AG04450 (cell line): ENCODE measurements at regions of chr4 and their contacts with region 1.

Region 1: DNA sequence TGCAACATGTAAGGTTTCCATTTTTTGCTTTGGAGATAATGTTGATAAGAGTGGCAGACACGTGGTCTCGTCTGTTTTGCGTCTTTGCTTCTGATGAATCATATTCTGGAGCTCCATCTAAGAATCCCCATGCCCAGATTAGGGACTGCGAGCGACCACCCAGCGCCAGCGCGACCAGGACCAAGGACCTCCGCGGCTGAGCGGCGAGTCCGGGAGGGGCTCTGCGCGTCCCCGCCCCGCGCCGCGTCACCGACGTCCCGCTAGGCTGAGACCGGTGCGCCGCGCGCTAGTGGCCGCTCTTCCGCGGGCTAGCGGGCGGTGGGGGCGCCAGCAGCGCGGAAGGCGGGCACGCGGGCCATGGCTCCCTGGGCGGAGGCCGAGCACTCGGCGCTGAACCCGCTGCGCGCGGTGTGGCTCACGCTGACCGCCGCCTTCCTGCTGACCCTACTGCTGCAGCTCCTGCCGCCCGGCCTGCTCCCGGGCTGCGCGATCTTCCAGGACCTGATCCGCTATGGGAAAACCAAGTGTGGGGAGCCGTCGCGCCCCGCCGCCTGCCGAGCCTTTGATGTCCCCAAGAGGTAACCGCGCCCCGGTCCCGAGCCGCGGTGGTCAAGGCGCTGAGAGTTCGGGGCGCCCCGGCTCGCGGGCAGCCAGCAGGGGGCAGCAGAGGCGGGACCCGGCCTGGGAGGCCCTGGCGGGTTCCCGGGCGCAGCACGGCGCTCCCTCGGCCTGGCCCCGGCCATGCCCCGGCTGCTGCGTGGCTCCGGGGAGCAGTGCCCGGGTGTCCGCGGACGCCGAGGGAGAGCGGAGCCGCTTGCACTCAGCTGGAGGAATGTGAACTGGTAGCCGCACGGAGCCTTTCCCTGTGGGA is at the start of gene SRD5A3:
- DNase-seq: no peak
- H3K4me3 ChIP-seq: peak within 1 kb of the TSS; percentile 71
- H3K27ac ChIP-seq: peak within 1 kb of the TSS; percentile 69
- H3K27me3 ChIP-seq: no peaks in the 10 kb centered on the region
- CTCF ChIP-seq: peak; percentile 70
- polyA plus RNA-seq, gene SRD5A3: 13.2 and 15.8 TPM in 2 replicates

Region 2: DNA sequence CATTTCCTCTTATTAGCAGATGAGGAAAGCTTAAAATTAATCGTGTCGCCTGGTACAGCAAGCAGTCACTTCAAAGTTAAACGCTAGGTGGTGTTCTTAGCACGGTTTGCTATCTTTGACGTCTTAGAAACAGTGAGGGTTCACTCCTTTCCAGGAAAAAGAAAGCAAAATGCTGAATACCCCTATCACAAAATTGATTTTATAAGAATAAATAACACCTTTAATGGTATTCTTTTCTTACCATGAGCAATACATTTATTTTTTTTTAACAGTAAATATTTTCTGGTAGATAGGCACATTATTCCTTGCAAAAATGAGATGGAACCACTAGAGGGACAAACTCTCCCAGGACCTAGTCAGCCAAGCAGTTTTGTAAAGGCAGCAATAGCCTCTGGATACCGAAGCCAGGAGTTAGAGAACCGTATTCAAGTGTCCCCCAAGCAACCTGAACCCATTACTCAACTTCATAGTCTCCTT is 374.7 kb before region 1 on chr4:
- CTCF ChIA-PET with region 1: interaction called, 22 read pairs
- POLR2A ChIA-PET with region 1: no interaction called
- DNase-seq: peak; percentile 4
- H3K4me3 ChIP-seq: no peak overlapping the region
- H3K27ac ChIP-seq: no peak overlapping the region
- H3K27me3 ChIP-seq: no peaks in the 10 kb centered on the region
- CTCF ChIP-seq: peak; percentile 77

Region 3: DNA sequence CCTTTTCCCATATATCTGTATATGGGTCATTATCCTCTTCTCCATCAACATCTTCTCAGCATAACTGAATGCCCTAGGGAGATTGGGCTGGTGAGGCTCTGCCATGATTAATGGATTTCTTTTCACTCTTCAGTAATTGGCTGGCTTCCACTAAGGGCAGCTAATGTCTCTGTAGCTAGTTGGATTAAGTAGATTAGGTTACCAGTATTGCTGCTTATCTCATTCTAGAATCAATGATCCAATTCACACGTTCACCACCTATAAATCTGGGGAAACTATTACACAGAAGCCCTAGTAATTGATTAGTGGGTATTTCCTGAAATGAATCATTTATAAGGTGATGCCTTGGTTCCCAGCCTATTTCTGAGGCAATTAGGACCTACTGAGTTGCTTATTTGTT is 315.6 kb before region 1 on chr4:
- CTCF ChIA-PET with region 1: no interaction called
- POLR2A ChIA-PET with region 1: no interaction called
- DNase-seq: no peak
- H3K4me3 ChIP-seq: no peak overlapping the region
- H3K27ac ChIP-seq: no peak overlapping the region
- H3K27me3 ChIP-seq: no peaks in the 10 kb centered on the region
- CTCF ChIP-seq: no peak

Region 4: GRCh38 chr4:55089916-55090315 is 256.3 kb before region 1 on chr4:
- CTCF ChIA-PET with region 1: no interaction called
- POLR2A ChIA-PET with region 1: no interaction called
- DNase-seq: no peak
- H3K4me3 ChIP-seq: no peak overlapping the region
- H3K27ac ChIP-seq: no peak overlapping the region
- H3K27me3 ChIP-seq: no peaks in the 10 kb centered on the region
- CTCF ChIP-seq: no peak

Region 5: GRCh38 chr4:55125087-55125721 is 221.0 kb before region 1 on chr4 and contains the start of gene KDR:
- CTCF ChIA-PET with region 1: no interaction called
- POLR2A ChIA-PET with region 1: no interaction called
- DNase-seq: no peak
- H3K4me3 ChIP-seq: peak within 1 kb of the TSS; percentile 50
- H3K27ac ChIP-seq: no peak within 1 kb of the TSS
- H3K27me3 ChIP-seq: peaks cover 31% of the 10 kb centered on the region
- CTCF ChIP-seq: no peak
- polyA plus RNA-seq, gene KDR: not detected in 2 replicates

Region 6: GRCh38 chr4:55321707-55322264 is 24.4 kb before region 1 on chr4:
- CTCF ChIA-PET with region 1: interaction called, 13 read pairs
- POLR2A ChIA-PET with region 1: no interaction called
- DNase-seq: no peak
- H3K4me3 ChIP-seq: no peak overlapping the region
- H3K27ac ChIP-seq: no peak overlapping the region
- H3K27me3 ChIP-seq: peaks cover 3% of the 10 kb centered on the region
- CTCF ChIP-seq: peak; percentile 69

Region 7: GRCh38 chr4:55363691-55364351 is 17.6 kb after region 1 on chr4:
- CTCF ChIA-PET with region 1: interaction called, 12 read pairs
- POLR2A ChIA-PET with region 1: no interaction called
- DNase-seq: no peak
- H3K4me3 ChIP-seq: no peak overlapping the region
- H3K27ac ChIP-seq: peak overlapping the region; percentile 11
- H3K27me3 ChIP-seq: no peaks in the 10 kb centered on the region
- CTCF ChIP-seq: no peak

Region 8: GRCh38 chr4:55409468-55410171 is 63.4 kb after region 1 on chr4:
- CTCF ChIA-PET with region 1: interaction called, 13 read pairs
- POLR2A ChIA-PET with region 1: no interaction called
- DNase-seq: no peak
- H3K4me3 ChIP-seq: no peak overlapping the region
- H3K27ac ChIP-seq: no peak overlapping the region
- H3K27me3 ChIP-seq: no peaks in the 10 kb centered on the region
- CTCF ChIP-seq: no peak

Region 9: DNA sequence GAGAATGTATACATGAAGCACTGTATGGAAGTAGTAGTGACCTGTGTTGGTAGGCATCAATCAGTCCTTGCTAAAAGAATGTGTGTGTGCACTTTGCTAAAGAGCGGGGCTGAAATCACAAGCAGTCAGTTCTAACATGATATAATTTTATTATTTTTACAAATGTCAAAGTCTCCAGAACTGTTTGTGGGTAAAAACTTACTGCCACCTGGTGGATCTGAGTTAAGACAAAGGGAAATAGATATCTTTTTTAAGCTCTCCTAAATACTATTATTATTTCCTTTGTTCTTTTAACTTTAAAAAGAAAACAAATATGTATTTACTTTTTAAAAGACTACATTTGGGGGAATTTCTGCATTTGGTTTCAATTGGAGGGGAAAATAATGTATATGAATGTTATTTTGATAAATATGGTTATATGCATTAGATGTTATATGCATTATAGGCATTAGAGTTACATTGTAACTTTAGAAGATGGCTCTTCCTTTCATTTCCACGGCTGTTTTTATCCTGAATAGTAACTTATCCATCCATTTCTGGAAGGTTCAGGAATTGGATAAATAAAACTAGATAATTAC is 208.3 kb after region 1 on chr4:
- CTCF ChIA-PET with region 1: interaction called, 53 read pairs
- POLR2A ChIA-PET with region 1: interaction called, 7 read pairs
- DNase-seq: no peak
- H3K4me3 ChIP-seq: no peak overlapping the region
- H3K27ac ChIP-seq: no peak overlapping the region
- H3K27me3 ChIP-seq: no peaks in the 10 kb centered on the region
- CTCF ChIP-seq: peak; percentile 62